Cardiac septum (tissue), 1 donor: ENCODE measurements at regions of chr2 and their contacts with region 1.

Region 1: GRCh38 chr2:50401772-50402653 is 629.9 kb downstream of the NRXN1 start:
- DNase-seq: no peak

Region 2: DNA sequence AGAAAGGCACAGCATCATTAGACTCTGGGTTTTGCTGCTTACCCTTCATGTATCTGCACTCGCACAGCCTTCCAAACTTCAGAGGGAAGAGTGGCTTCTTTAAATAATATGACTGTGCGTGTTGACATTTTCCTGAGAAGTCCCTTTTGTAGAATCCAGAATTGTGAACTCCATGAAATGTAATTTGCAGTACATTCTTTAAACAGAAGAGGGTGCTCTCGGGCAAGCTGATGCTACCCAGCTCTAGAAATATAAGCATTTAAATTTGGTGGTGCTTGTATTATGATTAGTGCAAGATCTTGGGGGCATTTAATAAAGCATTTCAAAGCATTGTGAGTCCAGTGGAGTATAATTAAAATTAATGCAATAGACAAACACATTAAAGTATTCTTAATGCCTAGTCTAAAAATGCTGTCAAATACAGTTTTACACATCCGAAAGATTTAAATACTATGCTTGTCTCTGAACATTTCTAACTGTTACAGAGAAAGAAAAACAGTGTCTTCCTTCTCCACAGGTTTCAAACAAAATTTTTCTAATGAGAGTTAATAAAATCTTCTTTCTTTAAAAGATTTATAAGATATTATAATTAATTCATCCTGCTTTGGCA is 1801.7 kb before region 1 on chr2:
- intact Hi-C with region 1: loop called (anchors 10 kb)
- DNase-seq: no peak

Region 3: DNA sequence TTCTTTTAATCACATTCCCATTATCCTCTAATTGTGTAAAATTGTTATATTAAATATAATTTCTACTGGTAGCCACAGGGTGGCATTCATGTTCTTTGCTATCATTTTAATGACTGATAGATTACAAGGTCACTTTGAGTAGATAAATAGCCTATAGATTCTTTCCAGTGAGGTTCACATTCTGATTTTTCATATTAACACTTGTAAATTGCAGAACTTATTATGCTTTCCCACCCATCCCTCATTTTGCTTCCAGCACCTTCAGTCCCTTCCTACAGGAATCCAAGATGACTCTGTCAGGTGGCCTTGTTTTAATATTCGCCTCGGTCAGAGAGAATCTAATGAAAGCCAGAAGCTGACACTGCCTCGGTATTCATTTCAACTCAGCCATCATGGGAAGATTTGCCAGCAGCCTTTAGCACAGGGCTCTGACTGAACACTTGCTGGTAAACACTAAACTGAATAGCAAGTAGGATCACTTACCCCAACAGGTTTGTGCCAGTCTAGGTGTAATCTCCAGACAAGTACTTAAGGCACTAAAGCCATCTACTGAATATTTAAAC is 1146.5 kb before region 1 on chr2:
- intact Hi-C with region 1: loop called (anchors 10 kb)
- DNase-seq: no peak

Region 4: GRCh38 chr2:49687918-49688317 is 714.1 kb before region 1 on chr2:
- intact Hi-C with region 1: loop called (anchors 2 kb)
- DNase-seq: no peak